ENCODE measurements at regions of chr6 and their contacts with region 1.

Region 1: GRCh38 chr6:108526739-108527174 is 34.0 kb upstream of the FOXO3 start:
- DNase-seq: no peak
- H3K4me3 ChIP-seq: no peak overlapping the region
- H3K27ac ChIP-seq: no peak overlapping the region
- H3K4me1 ChIP-seq: no peaks in the 10 kb centered on the region
- H3K27me3 ChIP-seq: no peaks in the 10 kb centered on the region
- CTCF ChIP-seq: peak; percentile 66 to 93 (median 75)
- EP300 ChIP-seq: no peak
- POLR2A ChIP-seq: no peak

Region 2: DNA sequence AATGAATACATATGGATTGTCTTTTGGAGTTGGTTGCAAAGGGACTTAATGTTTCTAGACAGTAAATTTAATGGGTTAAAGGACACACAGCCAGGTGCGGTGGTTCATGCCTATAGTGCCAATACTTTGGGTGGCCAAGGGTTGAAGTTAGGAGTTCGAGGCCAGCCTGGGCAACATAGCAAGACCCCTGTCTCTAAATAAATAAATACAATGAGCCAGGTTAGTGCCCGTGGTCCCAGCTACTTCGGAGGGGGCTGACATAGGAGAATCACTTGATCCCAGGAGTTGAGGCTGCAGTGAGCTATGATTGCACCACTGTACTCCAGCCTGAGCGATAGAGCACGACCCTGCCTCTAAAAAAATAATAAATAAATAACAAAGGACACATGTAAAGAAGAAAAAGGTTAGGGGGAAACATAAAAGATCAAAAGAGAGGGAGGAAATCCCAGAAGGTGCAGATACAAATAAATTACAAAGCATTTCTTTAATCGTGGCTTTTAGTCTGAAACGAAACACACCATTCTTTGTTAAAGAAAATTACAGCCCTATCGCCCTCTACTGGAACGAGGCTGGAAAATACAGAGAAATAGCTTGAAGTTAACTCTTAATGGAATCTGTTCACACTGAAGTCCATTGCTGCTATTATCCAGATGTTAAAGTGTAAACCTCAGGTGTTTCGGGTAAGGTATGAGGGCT is 660.0 kb before region 1 on chr6:
- intact Hi-C with region 1: no loop called
- DNase-seq: no peak
- H3K4me3 ChIP-seq: no peak overlapping the region
- H3K27ac ChIP-seq: no peak overlapping the region
- H3K4me1 ChIP-seq: no peaks in the 10 kb centered on the region
- H3K27me3 ChIP-seq: no peaks in the 10 kb centered on the region
- CTCF ChIP-seq: peak in 2 of 3 experiments; percentile 15 to 48
- EP300 ChIP-seq: no peak
- POLR2A ChIP-seq: no peak

Region 3: GRCh38 chr6:107982486-107982885 is 544.3 kb before region 1 on chr6:
- intact Hi-C with region 1: loop called (anchors 5 kb)
- DNase-seq: no peak
- H3K4me3 ChIP-seq: no peak overlapping the region
- H3K27ac ChIP-seq: no peak overlapping the region
- H3K4me1 ChIP-seq: no peaks in the 10 kb centered on the region
- H3K27me3 ChIP-seq: no peaks in the 10 kb centered on the region
- CTCF ChIP-seq: no peak
- EP300 ChIP-seq: no peak
- POLR2A ChIP-seq: no peak

Measured in esophagus muscularis mucosa (tissue), 4 donors.